ENCODE measurements at regions of chrX and their contacts with region 1.

Region 1: DNA sequence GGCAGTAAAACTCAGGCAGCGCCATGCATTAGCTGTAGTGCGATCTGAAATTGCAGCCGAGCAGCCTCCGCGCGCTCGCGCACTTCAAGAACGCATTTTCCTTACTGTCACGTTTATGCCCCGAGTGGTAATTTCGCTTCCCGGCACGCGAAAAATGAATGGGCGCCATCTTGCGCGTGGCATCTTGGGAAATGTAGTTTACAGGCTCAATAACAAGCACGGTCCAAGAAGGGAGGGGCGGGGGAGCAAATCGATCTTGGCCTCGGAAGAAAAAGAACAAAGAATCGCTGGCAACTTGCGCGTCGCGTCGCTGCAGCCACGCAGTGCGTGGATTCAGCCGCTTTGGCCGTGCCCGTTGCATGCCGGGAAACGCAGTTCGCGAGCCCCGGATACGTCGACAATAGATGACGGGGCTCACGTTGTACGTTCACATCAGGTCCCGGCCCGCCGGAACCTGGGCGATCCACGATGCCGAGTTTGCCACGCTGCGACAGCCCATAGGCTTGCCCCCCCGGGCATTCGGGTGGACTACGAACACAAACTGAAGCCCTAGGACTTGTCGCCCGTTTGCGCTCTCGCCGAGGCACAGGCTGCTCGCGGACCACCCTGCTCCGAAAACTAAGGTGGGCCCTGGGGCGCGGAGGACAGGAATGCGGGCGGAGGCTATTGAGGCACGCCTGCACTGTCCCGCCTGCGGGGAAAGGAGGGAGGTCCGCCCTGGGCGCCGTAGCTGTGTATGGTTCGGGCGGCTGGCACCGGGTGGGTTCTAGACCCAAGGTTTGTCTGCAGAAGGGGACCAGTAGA is at the start of gene FTSJ1:
- DNase-seq: peak; percentile 81 to 98 (median 88)

Region 2: DNA sequence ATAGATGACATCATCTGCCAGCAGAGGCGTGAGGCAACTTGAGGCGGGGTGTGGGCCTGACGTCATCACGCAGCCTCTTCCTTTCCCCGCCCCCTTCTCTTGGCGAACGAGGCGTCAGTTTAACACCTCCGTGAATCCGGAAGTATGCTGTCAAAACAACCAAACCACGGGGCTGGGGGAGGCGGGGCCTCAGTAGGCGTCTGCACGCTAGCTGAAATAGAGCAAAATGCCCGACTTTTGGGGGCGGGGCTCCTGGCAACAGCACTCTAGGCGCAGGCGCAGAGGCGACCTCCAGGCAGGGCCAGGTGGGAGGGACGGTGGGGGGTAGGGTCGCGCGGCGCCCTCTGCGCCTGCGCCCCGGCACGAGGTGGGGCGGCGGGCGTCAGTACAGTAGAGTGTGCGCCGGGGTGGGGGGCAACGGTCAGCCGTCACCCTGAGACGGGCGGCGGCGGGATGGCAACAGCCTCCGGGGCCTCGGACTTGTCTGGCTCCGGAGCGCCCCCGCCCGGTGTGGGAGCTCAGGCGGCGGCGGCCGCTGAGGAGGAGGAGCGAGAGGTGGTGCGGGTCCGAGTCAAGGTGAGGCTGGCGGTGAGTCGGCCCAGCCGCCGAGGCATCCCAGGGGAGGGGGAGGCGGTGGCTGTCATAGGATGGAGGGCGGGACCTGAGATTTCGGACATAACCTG is 63.5 kb after region 1 on chrX and contains the start of gene TBC1D25:
- intact Hi-C with region 1: loop called (anchors 1 kb)
- DNase-seq: peak; percentile 86 to 99 (median 90)

Region 3: GRCh38 chrX:48715072-48715471 is 239.1 kb after region 1 on chrX:
- intact Hi-C with region 1: no loop called
- DNase-seq: no peak

Region 4: DNA sequence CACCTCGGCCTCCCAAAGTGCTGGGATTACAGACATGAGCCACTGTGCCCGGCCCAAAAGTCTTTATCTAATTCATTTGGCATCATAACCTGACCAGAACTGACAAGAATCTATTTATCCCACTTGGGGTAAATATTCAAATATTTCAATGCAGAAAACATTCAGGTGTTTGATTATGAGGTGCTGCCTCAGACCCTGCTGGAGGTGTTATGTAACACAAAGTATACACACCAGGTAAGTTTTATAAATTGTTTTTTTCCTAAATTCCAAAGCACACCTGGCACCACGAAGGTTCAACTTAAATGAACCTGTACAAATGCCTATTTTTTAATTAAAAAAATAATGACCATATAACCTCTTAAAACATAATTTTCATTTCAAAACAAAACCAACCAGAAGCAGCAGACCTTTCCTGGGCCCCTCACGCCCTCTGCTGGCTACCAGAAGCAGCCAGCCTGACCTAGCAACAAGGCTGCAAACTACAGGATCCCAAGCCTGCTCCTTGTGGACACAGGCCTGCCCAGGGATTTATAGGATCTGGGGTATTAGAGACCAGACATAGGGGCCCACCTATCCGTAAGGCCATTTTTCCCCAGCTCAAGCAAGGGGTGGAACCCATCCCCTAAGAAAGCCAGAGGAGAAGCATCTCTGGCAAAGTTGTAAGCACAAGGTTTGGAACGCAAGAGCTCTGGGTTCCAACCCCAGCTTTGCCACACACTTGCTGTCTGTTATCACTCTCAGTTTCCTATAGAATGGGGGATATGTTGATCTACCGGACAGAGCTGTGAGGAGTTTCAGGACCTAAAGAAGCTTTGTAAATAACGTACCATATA is 469.8 kb after region 1 on chrX:
- intact Hi-C with region 1: no loop called
- DNase-seq: peak in 8 of 10 donors; percentile 19 to 91 (median 36)